IMR-90 (cell line): ENCODE measurements at regions of chr2 and their contacts with region 1.

Region 1: DNA sequence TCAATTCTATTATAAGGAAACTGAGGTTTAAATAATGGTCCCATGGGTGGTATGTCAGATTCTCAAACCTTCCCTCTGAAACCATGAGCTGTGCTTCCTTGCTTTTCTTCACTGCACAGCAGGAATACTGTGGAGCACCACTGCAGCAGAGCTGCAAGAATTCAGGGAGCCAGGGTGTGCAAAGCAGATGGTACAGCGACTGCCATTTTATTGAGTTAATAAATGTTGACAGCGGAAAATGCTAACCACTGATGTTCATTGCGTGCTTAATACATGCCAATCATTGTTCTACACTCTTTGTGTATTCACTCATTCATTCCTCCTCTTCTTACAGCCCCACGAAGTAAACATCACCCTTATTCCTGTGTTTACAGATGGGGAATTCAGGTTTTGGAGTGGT is 152.2 kb upstream of the THSD7B start:
- DNase-seq: no peak
- ATAC-seq: no peak
- H3K4me3 ChIP-seq: no peak overlapping the region
- H3K27ac ChIP-seq: no peak overlapping the region
- H3K4me1 ChIP-seq: no peaks in the 10 kb centered on the region
- H3K27me3 ChIP-seq: no peaks in the 10 kb centered on the region
- CTCF ChIP-seq: no peak
- POLR2A ChIP-seq: no peak
- RAD21 ChIP-seq: no peak

Region 2: DNA sequence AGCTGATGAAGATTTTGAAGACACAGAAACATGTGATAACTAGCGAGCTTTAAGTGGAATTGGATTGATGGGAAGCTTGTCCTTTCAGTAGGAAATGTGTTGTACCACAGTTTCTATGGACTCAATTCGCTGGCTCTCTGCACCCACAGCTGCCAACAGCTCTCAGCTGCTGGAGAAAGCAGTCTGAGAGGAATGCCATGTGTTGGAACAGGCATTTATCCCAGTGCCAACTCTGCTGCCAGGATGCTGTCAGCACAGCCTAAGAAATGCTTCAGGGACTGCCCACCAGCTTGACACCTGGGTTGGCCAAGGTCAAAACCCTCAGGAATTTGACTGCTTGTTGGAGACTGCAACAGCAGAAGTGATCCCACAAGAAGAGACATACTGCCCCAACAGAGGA is 40.8 kb before region 1 on chr2:
- CTCF ChIA-PET with region 1: no interaction called
- POLR2A ChIA-PET with region 1: no interaction called
- dilution Hi-C with region 1: no loop called
- in situ Hi-C with region 1: no loop called
- intact Hi-C with region 1: loop called (anchors 10 kb)
- DNase-seq: no peak
- ATAC-seq: no peak
- H3K4me3 ChIP-seq: no peak overlapping the region
- H3K27ac ChIP-seq: no peak overlapping the region
- H3K4me1 ChIP-seq: no peaks in the 10 kb centered on the region
- H3K27me3 ChIP-seq: no peaks in the 10 kb centered on the region
- CTCF ChIP-seq: no peak
- POLR2A ChIP-seq: no peak
- RAD21 ChIP-seq: no peak